ENCODE measurements at regions of chr9 and their contacts with region 1.

Region 1: DNA sequence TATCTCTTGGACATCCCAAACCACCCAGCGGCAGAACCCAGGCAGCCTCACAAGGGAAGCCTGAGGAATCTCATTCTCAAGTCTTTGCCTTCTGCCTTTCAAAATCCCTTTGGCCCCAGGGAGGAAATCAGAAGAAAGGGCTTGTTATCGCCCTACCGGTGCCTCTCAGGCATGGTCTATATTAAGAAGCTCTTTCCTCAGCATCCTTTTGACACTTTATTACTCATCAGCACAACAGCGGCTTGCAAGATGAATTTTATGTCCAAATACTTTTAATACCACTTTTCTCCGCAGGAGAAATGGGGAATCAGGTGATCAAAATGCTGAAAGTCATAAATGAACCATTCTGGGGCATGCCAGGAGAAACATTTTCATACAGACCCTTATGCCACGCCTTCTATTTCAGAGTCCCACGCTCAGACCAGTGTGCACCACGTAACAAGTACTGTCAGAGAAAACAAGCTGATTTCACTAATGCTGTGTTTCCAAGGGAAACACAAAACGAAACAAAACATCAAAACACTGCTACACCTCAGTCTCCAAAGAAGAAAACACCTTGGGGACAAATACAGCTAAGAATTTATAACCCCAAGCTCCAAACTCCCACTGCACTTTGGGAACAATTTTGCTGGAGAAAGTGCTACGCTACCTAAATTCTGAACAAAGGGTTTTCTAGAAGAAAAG is 30.0 kb downstream of the RAPGEF1 start:
- DNase-seq: peak; percentile 77 to 92 (median 84)
- H3K4me3 ChIP-seq: peak overlapping the region in 1 of 2 donors; percentile 8
- H3K4me3 Mint-ChIP-seq: peak overlapping the region; percentile 73 to 82 (median 78)
- H3K27ac ChIP-seq: peak overlapping the region; percentile 81
- H3K27ac Mint-ChIP-seq: peak overlapping the region; percentile 97 to 100 (median 99)
- H3K4me1 ChIP-seq: peaks cover 84% of the 10 kb centered on the region
- H3K4me1 Mint-ChIP-seq: peaks cover 53 to 94% (median 77%) of the 10 kb centered on the region in 4 donors
- H3K27me3 ChIP-seq: no peaks in the 10 kb centered on the region
- H3K27me3 Mint-ChIP-seq: no peaks in the 10 kb centered on the region

Region 2: GRCh38 chr9:131697097-131697496 is 12.8 kb before region 1 on chr9:
- CTCF ChIA-PET with region 1: interaction called, 4 read pairs
- POLR2A ChIA-PET with region 1: interaction called, 10 read pairs
- intact Hi-C with region 1: loop called (anchors 2 kb)
- DNase-seq: no peak
- H3K4me3 ChIP-seq: no peak overlapping the region
- H3K4me3 Mint-ChIP-seq: peak overlapping the region in 1 of 8 donors; percentile 48
- H3K27ac ChIP-seq: no peak overlapping the region
- H3K27ac Mint-ChIP-seq: peak overlapping the region in 4 of 7 donors; percentile 58 to 86 (median 68)
- H3K4me1 ChIP-seq: peaks cover 88% of the 10 kb centered on the region
- H3K4me1 Mint-ChIP-seq: peaks cover 77 to 99% (median 89%) of the 10 kb centered on the region in 4 donors
- H3K27me3 ChIP-seq: no peaks in the 10 kb centered on the region
- H3K27me3 Mint-ChIP-seq: no peaks in the 10 kb centered on the region

Region 3: DNA sequence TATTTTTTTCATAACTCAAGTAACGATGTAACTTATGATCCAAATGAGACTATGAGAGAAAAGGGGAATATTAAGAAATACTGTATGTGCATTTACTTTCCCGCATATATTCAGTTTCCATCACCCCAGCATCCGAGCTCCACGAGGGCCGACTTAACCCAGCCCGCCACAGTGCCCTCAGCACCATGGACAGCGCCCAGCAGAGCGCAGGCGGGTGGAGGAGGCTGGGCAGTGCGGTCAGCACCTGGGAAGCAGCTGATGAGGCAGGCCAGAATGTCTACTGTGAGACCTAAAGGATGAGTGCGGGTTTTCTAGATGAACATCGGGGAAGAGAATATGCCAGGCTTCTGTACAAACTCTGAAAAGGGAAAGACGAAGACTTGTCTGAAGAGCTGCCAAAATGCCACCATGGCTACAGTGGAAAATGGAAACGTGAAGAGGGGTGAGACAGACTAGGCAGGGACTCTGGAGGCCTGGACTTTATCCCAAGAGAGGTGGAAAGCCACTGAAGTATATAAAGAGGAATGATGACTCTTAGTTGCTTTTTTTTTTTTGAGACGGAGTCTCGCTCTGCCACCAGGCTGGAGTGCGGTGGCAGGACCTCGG is 404.3 kb after region 1 on chr9:
- CTCF ChIA-PET with region 1: no interaction called
- POLR2A ChIA-PET with region 1: no interaction called
- intact Hi-C with region 1: no loop called
- DNase-seq: peak in 4 of 5 donors; percentile 8 to 28 (median 22)
- H3K4me3 ChIP-seq: no peak overlapping the region
- H3K4me3 Mint-ChIP-seq: no peak overlapping the region
- H3K27ac ChIP-seq: no peak overlapping the region
- H3K27ac Mint-ChIP-seq: no peak overlapping the region
- H3K4me1 ChIP-seq: no peaks in the 10 kb centered on the region
- H3K4me1 Mint-ChIP-seq: no peaks in the 10 kb centered on the region
- H3K27me3 ChIP-seq: no peaks in the 10 kb centered on the region
- H3K27me3 Mint-ChIP-seq: peaks cover 19 to 31% of the 10 kb centered on the region in 2 donors